ENCODE measurements at regions of chr1 and their contacts with region 1.

Region 1: DNA sequence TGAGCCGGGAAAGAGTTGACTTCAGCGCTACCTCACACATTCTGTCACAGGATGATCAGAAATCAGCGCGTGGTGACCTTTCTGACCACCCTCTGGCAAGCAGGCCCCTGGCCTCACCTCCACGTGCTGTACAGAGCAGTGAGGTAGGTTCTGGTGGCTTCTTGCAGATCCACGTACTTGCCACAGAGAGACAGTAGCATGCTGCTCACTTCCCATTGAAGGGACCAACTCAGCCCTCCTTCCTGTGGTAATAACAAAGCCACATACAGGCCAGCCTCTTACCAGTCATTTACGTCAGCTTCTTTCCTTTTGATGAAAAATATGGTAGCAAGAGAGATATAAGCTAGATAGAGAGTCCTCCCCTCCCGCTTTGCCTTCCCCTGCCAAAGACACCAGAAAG is 200.7 kb downstream of the CHRM3 start:
- DNase-seq: no peak
- ATAC-seq: no peak
- H3K4me3 ChIP-seq: no peak overlapping the region
- H3K27ac ChIP-seq: no peak overlapping the region
- H3K4me1 ChIP-seq: no peaks in the 10 kb centered on the region
- H3K27me3 ChIP-seq: no peaks in the 10 kb centered on the region
- CTCF ChIP-seq: no peak

Region 2: DNA sequence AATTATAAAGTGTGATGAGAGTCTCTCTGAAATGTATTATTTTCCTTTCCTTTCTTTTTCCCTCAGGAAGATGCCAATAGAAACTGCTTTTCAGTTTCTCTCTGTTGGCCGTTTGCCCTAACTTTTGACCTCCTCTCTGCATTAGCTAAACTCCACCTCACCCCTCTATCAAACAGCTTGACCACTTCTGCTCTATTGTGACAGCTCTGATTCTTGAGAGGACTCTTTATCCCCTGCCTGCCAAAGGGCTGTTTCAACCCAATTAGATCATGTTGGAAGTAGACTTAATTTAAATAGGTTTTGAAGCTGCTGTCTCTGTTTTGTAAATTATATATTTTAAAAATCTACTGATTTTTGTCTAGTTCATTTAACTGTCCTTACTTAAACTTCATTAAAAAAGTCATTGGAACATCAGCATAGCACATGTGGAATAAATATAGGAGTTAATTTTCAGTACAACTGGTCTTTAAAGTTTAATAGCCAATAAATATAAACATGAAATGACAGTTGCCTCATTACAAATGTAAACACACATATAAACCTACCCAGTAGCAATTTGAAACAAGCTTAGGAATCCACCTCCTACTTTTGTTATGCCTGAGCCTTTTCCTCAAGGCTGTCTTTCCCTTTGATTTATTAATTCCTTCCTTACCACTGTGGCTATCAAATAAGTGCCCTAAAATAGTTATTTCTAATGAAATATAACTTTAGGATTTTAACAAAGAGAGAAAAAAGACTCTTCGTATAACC is 48.7 kb before region 1 on chr1:
- CTCF ChIA-PET with region 1: no interaction called
- POLR2A ChIA-PET with region 1: no interaction called
- intact Hi-C with region 1: no loop called
- DNase-seq: no peak
- ATAC-seq: peak; percentile 62
- H3K4me3 ChIP-seq: no peak overlapping the region
- H3K27ac ChIP-seq: no peak overlapping the region
- H3K4me1 ChIP-seq: peaks cover 9% of the 10 kb centered on the region
- H3K27me3 ChIP-seq: no peaks in the 10 kb centered on the region
- CTCF ChIP-seq: no peak

Region 3: GRCh38 chr1:239706245-239706892 is 119.3 kb after region 1 on chr1:
- CTCF ChIA-PET with region 1: no interaction called
- POLR2A ChIA-PET with region 1: no interaction called
- intact Hi-C with region 1: no loop called
- DNase-seq: no peak
- ATAC-seq: no peak
- H3K4me3 ChIP-seq: no peak overlapping the region
- H3K27ac ChIP-seq: no peak overlapping the region
- H3K4me1 ChIP-seq: no peaks in the 10 kb centered on the region
- H3K27me3 ChIP-seq: no peaks in the 10 kb centered on the region
- CTCF ChIP-seq: no peak

Region 4: DNA sequence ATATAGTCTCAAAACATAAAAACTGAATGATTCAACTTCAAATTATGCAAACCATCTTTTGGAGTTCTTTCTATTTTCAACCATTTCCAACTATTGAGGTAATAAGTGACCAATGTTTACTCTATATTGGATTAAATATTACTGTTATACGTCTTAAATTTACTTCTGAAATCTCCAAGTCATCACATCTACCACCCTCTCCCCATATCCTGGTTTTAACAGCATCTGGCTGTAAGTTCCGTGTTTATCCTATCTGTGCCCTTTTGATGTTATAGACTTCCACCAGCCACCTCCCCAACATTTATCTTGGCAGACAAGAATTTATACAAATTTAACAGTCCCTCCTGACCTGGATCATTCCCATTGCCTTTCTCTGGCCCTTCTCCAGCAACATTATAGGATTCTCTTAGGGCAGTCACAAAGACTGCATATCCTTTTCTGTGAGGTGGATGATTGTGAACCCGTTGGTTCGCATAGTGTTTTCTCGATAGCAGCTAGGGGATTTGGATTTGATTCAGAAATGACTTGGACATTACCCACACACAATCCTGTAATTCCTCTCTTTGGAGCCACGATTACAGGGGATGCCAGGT is 191.3 kb after region 1 on chr1:
- CTCF ChIA-PET with region 1: no interaction called
- POLR2A ChIA-PET with region 1: no interaction called
- intact Hi-C with region 1: loop called (anchors 5 kb)
- DNase-seq: peak; percentile 30
- ATAC-seq: peak; percentile 86
- H3K4me3 ChIP-seq: no peak overlapping the region
- H3K27ac ChIP-seq: no peak overlapping the region
- H3K4me1 ChIP-seq: no peaks in the 10 kb centered on the region
- H3K27me3 ChIP-seq: no peaks in the 10 kb centered on the region
- CTCF ChIP-seq: no peak

Measured in PC-3 (cell line).